A673 (cell line): ENCODE measurements at regions of chr12 and their contacts with region 1.

Region 1: GRCh38 chr12:48946205-48946604 is 11.1 kb downstream of the ARF3 start:
- DNase-seq: no peak
- H3K4me3 ChIP-seq: no peak overlapping the region
- H3K27ac ChIP-seq: no peak overlapping the region
- H3K4me1 ChIP-seq: no peaks in the 10 kb centered on the region
- H3K27me3 ChIP-seq: no peaks in the 10 kb centered on the region
- CTCF ChIP-seq: no peak

Region 2: DNA sequence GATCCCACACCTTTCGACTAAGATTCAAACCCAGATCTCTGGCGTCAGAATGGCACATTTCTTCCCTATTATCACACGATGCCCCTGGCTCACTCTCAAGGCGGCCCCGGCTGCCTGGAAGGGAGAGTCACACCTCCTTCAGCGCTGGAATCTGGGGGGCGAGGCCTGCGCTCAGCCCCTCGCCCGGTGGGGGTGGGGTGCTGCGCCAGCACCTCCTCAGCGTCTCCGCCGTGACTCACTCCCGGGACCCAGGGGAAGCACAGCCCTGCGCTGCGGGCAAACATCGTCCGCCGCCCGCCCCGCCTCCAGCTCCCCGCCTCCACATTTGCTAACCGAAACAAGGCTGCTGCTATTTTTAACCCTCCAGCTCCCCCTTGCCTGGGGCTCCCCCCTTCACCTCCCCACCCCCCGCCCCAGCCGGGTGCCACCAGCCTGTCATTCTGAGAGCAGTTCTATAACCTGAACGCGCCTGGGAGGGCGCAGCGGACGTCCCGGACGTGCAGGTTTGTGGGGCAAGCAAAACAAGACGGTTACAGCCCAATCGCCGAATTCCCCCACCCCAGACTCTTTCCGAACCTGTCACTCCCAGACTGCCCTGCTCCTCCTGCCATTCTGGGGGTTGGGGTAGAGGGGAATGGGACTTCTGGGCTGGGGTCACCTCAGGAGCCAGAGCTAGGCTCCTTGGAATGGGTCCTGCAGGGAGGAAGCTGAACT is 1133.3 kb before region 1 on chr12:
- CTCF ChIA-PET with region 1: no interaction called
- POLR2A ChIA-PET with region 1: no interaction called
- intact Hi-C with region 1: no loop called
- DNase-seq: peak; percentile 89
- H3K4me3 ChIP-seq: peak overlapping the region; percentile 43
- H3K27ac ChIP-seq: peak overlapping the region; percentile 78
- H3K4me1 ChIP-seq: peaks cover 68% of the 10 kb centered on the region
- H3K27me3 ChIP-seq: no peaks in the 10 kb centered on the region
- CTCF ChIP-seq: no peak

Region 3: DNA sequence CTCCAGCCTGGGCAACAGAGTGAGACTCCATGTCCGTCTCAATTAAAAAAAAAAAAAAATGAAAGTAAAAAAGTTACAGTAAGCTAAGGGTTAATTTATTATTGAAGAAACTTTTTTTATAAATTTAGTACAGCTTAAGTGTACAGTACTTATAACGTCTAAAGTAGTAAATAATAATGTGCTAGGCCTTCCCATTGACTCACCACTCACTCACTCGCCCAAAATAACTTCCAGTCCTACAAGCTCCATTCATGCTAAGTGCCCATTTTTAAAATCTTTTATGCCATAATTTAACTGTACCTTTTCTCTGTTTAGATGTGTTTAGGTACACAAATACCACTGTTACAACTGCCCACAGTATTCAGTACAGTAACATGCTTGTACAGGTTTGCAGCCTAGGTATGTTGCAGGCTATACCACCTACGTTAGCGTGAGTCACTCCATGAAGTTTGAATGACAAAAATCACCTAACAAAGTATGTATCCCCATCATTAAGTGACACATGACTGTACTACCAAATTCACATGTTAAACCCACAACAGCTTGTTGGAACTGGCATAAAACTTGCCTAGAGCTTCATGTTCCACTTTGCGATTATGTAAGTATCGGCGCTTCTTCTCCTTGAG is 274.9 kb before region 1 on chr12:
- CTCF ChIA-PET with region 1: no interaction called
- POLR2A ChIA-PET with region 1: interaction called, 12 read pairs
- intact Hi-C with region 1: no loop called
- DNase-seq: no peak
- H3K4me3 ChIP-seq: no peak overlapping the region
- H3K27ac ChIP-seq: no peak overlapping the region
- H3K4me1 ChIP-seq: no peaks in the 10 kb centered on the region
- H3K27me3 ChIP-seq: no peaks in the 10 kb centered on the region
- CTCF ChIP-seq: no peak

Region 4: DNA sequence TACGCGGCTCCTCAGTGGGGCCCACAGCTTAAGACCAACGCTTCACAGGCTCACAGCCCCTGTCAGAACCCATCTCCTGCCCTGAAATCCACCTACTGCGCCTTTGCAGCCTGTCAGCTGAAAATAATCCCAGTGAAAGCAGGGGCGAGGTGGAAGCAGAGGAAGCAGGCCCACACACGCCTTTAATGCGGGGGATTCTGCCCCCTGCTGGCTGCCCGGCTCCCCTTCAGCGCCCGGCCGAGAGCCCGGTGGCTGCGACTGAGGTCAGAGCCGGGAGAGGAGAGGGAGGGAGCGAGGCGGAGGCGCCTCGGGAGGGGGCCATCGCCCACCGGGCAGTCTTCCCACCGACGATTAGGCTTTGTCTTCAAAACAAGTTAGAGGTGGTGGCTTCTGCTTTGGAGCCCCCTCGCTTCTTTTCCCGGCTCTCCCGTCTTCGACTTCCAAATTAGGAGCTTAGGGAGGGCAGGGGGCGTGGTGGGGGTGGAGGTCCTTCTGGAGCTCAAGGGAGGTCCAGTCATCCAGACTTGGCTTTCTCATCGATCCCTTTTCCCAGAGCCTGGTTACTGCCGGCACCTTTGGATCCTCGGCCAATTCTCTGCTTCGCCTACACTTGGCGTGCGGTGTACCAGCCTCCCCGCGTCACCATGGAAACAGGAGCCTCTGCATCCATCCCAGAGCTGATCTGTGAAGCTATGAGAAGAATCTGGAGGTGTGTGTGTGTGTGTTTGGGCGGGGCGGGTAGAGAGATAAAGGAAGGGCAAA is 55.4 kb before region 1 on chr12:
- CTCF ChIA-PET with region 1: no interaction called
- POLR2A ChIA-PET with region 1: interaction called, 10 read pairs
- intact Hi-C with region 1: no loop called
- DNase-seq: peak; percentile 80
- H3K4me3 ChIP-seq: peak overlapping the region; percentile 27
- H3K27ac ChIP-seq: no peak overlapping the region
- H3K4me1 ChIP-seq: no peaks in the 10 kb centered on the region
- H3K27me3 ChIP-seq: peaks cover 13% of the 10 kb centered on the region
- CTCF ChIP-seq: peak; percentile 95